Left ventricle myocardium inferior (tissue), 1 donor: ENCODE measurements at regions of chr17 and their contacts with region 1.

Region 1: DNA sequence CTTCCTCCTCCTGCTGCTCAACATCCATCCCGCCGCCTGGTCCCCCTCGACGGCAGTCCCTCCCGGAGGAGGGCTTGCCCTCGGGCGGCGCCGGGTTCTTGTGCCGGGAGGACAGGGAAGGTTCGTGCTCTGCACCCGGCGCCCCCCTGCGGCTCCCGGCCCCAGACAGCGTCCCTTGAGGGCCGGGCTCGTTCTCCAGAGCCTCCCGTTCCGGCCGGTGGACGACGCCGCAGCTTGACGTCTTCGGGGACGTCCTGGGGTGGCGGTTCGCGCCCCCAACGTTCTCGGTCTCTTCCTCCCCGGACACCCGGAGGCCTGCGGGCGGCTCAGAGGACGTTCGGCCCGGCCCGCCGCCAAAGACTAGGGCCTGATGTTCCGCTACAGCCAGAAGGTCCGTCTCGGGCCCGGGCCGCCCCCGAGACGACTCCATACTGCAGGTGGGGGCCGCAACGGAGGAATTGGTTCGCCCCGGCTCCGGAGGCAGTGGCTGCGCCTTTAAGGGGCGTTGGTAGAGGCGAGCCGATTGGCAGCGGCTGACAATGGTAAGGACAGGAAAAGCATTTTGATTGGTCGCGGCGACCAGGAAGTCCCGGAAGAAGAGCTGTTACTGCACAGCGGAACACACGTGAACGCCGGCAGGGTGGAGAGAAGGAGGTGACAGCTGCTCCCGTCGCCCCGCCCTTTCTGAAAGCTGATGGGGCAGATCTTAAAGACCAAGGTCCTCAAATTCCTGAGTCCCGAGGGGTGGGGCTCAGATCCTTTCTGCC is at the start of gene BORCS6:
- DNase-seq: peak; percentile 97
- H3K4me3 ChIP-seq: peak within 1 kb of the TSS; percentile 83
- H3K27ac ChIP-seq: peak within 1 kb of the TSS; percentile 95
- H3K4me1 ChIP-seq: peaks cover 57% of the 10 kb centered on the region
- H3K27me3 ChIP-seq: no peaks in the 10 kb centered on the region
- CTCF ChIP-seq: peak; percentile 18
- total RNA-seq, gene BORCS6: 8.4 TPM

Region 2: DNA sequence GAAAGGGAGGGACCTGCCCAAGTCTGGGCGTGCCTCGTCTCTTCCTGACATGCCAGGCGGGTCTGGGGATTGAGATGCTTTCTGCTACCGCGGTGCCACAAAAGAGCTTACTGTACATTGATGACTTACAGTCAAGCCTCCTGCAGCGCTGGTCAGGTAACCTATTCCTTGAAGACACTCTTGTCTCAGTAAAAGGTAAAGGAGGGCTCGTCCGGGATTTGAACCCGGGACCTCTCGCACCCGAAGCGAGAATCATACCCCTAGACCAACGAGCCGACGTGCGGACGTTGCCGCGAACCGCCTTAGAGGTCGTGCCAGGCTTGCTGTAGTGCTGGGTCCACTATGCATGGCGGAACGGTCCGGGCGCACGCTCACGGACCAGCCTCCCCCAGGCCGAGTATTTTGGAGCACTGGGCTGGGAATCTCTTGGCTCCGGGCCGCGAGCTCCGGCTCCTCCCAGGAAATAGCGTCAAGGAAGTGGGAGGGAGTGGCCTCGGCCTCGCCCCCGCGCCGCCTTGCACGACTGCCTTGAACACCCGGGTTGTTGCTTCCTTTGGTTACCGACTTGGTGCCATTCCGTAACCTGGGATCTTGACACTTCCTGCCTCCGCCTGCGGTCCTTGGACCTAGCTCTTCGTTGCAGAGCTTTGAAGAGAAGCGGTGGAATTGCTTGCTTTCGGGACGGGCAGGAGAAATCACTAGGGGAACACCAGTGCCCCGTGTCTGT is 32.9 kb after region 1 on chr17:
- intact Hi-C with region 1: loop called (anchors 5 kb)
- DNase-seq: peak; percentile 95
- H3K4me3 ChIP-seq: peak overlapping the region; percentile 75
- H3K27ac ChIP-seq: peak overlapping the region; percentile 99
- H3K4me1 ChIP-seq: peaks cover 52% of the 10 kb centered on the region
- H3K27me3 ChIP-seq: no peaks in the 10 kb centered on the region
- CTCF ChIP-seq: no peak